Esophagus squamous epithelium (tissue), 5 donors: ENCODE measurements at regions of chr12 and their contacts with region 1.

Region 1: DNA sequence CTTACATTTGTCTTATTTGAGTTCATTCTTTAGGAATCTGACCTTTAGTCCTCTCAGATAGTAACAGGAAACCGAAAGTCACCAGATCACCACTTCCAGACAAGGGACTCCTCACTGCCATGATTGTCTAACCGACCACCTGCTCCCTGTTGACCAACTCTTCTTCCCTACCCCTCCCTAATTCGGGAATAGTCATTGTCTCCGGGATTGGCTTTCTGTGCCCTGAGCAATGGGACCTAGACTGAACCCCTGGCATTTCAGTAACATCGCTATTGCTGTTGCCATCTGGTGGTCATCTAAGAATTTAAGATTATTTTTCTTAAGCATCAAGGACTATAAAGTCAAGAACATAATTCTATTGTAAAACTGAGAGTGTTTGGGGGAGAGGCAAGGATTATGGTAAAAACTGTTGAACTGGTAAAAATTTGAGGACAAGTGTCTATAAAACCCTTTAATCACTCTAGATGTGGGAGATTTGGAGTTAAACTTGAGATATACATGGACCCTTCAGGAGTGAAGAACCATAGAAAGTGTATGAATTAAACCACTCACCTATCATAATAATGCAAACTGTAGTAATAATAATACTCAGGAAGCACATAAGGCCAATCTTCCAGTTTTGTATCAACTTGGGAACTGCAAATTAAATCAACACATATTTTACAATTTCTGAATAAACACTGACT is 6.3 kb downstream of the CLEC2A start:
- DNase-seq: no peak
- H3K4me3 ChIP-seq: peak overlapping the region in 3 of 4 donors; percentile 7 to 54 (median 18)
- H3K27ac ChIP-seq: no peak overlapping the region
- H3K4me1 ChIP-seq: peaks cover 0 to 5% (median 0%) of the 10 kb centered on the region in 3 donors
- H3K27me3 ChIP-seq: no peaks in the 10 kb centered on the region
- CTCF ChIP-seq: peak in 5 of 6 experiments; percentile 50 to 68 (median 54)
- POLR2A ChIP-seq: no peak

Region 2: DNA sequence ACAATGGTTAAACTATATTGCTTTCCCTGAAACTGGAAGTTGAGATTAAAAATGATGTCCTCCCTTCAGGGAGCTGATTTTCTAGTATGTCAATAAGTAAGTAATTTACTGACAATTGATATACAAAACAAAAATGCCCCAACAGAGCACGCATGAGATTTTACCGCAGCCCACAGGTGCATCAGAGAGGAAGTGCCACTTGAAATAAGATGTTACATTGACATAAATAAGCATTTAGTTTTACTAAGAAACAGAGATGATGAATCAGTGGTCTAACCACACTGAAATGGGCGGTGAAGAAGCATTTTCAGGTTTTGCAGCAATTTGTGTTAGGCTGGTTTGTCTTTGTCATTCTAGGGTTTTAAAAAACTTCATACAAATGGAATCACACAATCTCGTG is 184.1 kb before region 1 on chr12:
- intact Hi-C with region 1: loop called (anchors 10 kb)
- DNase-seq: no peak
- H3K4me3 ChIP-seq: no peak overlapping the region
- H3K27ac ChIP-seq: peak overlapping the region in 3 of 4 donors; percentile 45 to 77 (median 64)
- H3K4me1 ChIP-seq: peaks cover 0 to 47% (median 4%) of the 10 kb centered on the region in 3 donors
- H3K27me3 ChIP-seq: no peaks in the 10 kb centered on the region
- CTCF ChIP-seq: no peak
- POLR2A ChIP-seq: no peak

Region 3: DNA sequence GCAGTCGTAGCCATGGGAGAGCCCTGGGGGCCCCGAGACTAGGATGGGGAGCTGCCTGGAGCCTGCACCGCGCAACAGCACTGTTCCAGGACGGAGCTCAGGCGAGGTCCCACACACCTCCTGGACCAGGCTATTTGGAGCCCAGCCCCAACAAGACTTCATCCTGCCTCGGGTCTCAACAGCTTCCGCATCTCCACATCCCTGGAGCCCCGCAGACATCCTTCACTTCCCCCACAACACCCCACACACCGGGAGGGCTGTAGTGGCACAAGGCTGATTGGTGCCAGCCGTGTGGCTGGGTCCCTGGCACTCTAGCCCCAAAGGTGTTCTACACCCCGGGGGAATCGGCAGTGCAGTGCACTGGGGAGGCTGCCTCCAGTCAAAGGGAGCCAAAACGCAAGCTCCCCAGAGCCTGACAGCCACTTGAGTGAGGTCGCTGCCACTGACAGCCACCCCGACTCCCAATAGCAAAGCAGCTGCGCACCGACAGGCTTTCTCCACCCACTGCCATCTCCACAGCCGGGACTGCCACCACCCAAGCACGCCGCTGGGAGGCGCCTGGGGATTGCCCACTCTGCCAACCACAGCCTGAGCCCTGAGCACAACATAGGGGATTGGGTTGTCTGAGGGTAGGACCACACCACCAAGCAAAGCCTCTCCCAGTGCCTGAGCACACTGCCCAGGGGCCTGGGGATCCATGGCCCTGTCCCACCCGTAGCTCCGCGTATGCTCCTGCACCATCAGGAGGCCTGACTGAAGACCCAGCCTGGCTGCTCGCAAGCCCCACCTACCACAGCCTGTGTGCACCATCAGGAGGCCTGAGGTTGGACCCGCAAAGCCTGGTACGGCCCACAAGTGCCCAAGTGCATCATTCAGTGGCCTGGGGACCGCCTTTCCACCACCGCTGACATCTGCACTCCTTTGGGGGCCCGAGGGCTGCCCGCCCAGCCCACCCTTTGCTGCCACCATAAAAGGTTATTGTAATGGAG is 111.7 kb before region 1 on chr12:
- intact Hi-C with region 1: loop called (anchors 5 kb)
- DNase-seq: peak; percentile 31
- H3K4me3 ChIP-seq: peak overlapping the region; percentile 18 to 65 (median 26)
- H3K27ac ChIP-seq: no peak overlapping the region
- H3K4me1 ChIP-seq: peaks cover 0 to 9% (median 6%) of the 10 kb centered on the region in 3 donors
- H3K27me3 ChIP-seq: peaks cover 0 to 21% (median 0%) of the 10 kb centered on the region in 4 donors
- CTCF ChIP-seq: peak; percentile 48 to 94 (median 82)
- POLR2A ChIP-seq: no peak